ENCODE measurements at regions of chr1 and their contacts with region 1.

Region 1: DNA sequence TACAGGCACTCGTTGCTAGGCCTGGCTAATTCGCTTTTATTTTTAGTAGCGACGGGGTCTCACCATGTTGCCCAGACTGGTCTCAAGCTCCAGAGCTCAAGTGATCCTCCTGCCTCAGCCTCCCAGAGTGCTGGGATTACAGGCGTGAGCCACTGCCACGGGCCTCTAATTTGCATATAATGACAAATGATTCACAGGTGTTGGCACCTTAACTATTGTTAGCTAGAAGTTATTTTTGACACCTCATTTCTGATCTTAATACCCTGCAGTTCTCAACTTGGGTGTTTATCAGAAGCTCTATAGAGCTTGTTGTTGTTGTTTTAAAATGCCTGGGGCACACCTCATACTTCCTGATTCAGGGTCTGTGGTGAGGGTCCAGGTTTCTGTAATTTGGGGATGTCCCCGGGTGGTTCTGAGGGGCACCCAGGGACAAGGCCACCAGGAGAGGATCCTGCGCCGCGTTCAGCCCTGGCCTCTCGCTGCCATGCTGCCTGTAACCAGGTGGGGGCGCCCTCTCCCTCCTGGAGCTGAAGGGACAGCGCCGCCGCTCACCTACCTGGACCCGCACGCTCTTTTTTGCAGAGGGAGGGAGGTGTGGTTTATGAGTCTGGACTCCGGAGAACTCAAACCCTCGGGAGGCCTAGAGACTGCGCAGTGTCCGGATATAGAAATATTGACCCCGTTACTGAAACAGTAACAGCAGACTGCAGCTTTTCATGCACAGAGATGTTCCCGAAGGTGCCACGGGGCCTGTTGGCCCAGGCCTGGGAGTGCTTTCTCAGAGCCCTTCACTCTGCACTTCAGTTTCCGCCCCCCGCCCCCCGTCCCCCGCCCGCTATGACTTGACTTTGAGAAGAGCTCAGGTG is 23.0 kb upstream of the NEK2 start:
- DNase-seq: peak; percentile 79
- ATAC-seq: peak; percentile 89 to 93

Region 2: GRCh38 chr1:210477381-210477783 is 1221.0 kb before region 1 on chr1:
- intact Hi-C with region 1: no loop called
- DNase-seq: no peak
- ATAC-seq: peak in 1 of 2 donors; percentile 15

Region 3: DNA sequence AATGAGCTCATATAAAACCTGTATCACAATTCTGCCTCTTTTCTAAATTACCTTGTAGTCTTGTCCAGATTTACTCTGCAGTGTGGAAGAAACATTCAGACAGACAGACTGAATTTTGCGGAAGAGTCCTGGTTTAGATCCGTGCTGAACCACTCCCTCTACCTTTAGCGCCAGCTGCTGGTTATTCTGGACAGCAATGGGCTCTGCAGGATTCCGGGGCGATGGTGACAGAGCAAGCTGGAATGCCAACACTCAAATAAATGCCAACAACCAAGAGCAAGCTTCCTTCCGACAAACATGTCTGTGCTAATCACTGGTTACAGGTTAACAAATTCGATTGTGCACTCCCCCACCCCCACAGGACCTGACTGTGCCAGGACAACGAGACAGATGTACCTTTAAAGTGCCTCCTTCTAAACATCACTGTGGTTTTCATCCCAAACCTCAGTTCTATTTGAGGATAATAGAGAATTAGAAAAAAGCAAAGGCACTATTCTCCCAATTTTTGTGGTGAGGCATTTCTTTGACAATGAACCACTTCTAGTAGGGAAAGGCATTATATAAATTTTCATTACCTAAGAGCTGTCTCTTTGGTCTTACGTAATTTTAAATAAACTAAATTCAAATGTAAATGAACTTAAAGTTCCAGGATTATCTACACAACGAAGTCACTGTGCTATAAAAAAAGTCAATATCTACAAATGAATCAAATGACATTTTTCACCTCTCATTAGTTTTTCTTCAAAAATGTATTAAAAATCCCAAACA is 246.5 kb after region 1 on chr1:
- intact Hi-C with region 1: loop called (anchors 5 to 10 kb)
- DNase-seq: no peak
- ATAC-seq: peak; percentile 90 to 92

Region 4: DNA sequence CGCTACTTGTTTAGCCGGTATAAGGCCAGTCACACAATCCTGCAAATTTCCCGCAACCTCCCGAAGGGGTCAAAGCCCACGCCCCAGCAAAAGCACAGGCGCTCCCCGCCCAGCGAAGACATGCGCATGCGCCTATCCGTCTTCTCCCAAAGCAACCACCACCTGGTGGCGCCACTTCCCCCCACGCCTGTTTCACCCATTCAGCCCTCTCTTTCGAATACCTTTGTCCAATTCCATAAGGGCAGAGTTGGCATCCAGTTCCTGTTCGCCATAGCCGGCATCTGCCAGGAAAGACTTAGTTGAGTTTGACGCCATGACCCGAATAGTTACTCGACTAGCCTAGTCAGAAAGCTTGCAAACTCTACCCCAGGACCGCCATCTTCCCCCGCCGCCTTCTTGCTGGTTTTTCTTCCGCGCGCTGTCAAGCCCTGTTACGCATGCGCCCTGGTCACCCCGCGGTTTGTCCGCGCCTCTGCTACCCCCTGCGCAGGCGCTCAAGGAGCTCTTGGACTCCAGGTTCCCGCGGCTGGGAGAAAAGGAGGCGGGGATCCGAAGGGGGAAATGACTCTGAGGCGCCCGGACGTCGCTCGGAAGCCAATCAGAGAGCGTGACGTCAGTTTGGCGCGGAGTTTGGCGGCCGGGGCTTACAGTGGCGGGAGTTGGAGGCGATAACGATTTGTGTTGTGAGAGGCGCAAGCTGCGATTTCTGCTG is 336.9 kb after region 1 on chr1 and contains the starts of genes DTL and INTS7:
- intact Hi-C with region 1: loop called in 1 of 2 experiments (anchors 10 kb)
- DNase-seq: peak; percentile 99
- ATAC-seq: peak; percentile 97 to 98
- total RNA-seq, gene DTL: 0.71 to 3.9 TPM
- total RNA-seq, gene INTS7: 8.1 to 10.2 TPM